Calu3 (cell line): ENCODE measurements at regions of chr2 and their contacts with region 1.

Region 1: DNA sequence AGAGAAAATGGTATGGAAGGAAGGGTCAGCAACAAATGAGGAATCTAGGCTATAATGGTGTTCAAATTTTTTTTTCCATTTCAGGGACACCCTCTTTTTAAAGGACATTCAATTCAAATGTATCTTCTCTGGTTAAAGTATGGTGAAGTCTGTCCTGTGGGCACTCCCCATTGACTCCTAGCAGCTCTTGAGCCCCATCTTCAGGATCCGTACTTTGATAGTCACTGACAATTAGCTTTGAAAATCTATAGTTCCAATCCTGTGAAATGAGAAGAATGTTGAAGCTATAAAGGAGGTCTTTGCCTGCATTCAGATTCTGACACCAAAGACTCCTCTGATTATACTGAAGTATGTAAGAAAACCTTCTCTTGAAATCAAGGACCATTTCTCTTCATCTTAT is 43.3 kb downstream of the KCNH7 start:
- DNase-seq: peak; percentile 7
- H3K4me3 Mint-ChIP-seq: no peak overlapping the region
- H3K27ac Mint-ChIP-seq: no peak overlapping the region
- H3K4me1 Mint-ChIP-seq: no peaks in the 10 kb centered on the region
- H3K27me3 Mint-ChIP-seq: no peaks in the 10 kb centered on the region
- CTCF ChIP-seq: no peak

Region 2: DNA sequence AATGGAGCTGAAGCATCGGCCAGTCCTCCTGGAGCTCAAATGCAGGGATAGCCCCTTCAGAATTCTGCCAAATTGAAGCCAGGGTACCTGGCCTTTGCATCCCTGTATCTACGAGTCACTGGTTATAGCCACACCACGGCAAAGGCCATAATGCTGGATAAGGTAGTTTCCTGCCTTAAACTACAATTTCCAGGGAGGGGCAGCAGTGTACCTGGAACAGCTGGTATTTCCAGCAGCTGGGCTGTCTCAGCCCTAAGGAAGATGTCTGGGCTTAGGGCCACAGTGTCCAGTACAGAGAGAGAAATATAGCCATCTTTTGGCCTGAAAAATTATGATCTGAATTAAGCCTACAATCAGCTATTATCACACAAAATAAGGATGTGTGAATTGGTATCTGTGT is 271.1 kb before region 1 on chr2:
- CTCF ChIA-PET with region 1: interaction called, 6 read pairs
- intact Hi-C with region 1: loop called (anchors 1 kb)
- DNase-seq: peak; percentile 55
- H3K4me3 Mint-ChIP-seq: no peak overlapping the region
- H3K27ac Mint-ChIP-seq: no peak overlapping the region
- H3K4me1 Mint-ChIP-seq: peaks cover 9% of the 10 kb centered on the region
- H3K27me3 Mint-ChIP-seq: no peaks in the 10 kb centered on the region
- CTCF ChIP-seq: no peak